ENCODE measurements at regions of chr19 and their contacts with region 1.

Region 1: GRCh38 chr19:16726916-16727315 is 7.3 kb downstream of the NWD1 start:
- DNase-seq: no peak
- ATAC-seq: no peak; a peak in 1 of 6 replicates
- H3K4me3 ChIP-seq: no peak overlapping the region
- H3K27ac ChIP-seq: no peak overlapping the region
- H3K4me1 ChIP-seq: no peaks in the 10 kb centered on the region
- CTCF ChIP-seq: no peak
- EP300 ChIP-seq: no peak
- POLR2A ChIP-seq: no peak
- RAD21 ChIP-seq: no peak

Region 2: DNA sequence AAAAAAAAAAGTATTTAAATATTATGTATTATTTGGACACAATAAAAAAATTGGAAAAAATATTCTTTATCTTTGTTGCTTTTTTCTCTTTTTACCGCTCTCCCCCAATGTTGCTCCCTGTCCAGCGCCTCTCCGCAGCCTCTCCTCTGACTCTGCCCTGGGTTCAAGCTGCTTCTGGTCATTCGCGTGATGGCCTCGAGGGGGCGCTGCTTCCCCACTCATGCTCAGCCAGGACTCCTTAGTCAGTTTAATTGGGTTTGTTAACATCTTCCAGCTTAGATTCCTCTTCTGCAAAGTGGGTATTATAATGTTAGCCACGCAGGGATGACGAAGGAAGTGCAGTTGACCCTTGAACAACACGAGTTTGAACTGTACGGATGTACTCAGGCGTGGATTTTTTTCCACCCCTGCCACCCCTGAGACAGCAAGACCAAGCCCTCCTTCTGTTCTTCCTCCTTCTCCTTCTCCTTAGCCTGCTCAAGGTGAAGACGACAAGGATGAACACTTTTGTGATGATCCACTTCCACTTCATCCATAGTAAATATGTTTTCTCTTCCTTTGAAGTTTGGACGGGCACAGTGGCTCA is 12.1 kb before region 1 on chr19:
- CTCF ChIA-PET with region 1: interaction called, 13 read pairs
- POLR2A ChIA-PET with region 1: no interaction called
- DNase-seq: peak in 1 of 2 experiments; percentile 52
- ATAC-seq: peak; percentile 54 to 64; a peak in 4 of 6 replicates
- H3K4me3 ChIP-seq: no peak overlapping the region
- H3K27ac ChIP-seq: no peak overlapping the region
- H3K4me1 ChIP-seq: no peaks in the 10 kb centered on the region; the same call in 2 of the 3 replicates
- CTCF ChIP-seq: peak; percentile 60
- EP300 ChIP-seq: no peak
- POLR2A ChIP-seq: no peak
- RAD21 ChIP-seq: peak; percentile 62 to 76

Measured in A549 (cell line).